ENCODE measurements at regions of chr1 and their contacts with region 1.

Region 1: DNA sequence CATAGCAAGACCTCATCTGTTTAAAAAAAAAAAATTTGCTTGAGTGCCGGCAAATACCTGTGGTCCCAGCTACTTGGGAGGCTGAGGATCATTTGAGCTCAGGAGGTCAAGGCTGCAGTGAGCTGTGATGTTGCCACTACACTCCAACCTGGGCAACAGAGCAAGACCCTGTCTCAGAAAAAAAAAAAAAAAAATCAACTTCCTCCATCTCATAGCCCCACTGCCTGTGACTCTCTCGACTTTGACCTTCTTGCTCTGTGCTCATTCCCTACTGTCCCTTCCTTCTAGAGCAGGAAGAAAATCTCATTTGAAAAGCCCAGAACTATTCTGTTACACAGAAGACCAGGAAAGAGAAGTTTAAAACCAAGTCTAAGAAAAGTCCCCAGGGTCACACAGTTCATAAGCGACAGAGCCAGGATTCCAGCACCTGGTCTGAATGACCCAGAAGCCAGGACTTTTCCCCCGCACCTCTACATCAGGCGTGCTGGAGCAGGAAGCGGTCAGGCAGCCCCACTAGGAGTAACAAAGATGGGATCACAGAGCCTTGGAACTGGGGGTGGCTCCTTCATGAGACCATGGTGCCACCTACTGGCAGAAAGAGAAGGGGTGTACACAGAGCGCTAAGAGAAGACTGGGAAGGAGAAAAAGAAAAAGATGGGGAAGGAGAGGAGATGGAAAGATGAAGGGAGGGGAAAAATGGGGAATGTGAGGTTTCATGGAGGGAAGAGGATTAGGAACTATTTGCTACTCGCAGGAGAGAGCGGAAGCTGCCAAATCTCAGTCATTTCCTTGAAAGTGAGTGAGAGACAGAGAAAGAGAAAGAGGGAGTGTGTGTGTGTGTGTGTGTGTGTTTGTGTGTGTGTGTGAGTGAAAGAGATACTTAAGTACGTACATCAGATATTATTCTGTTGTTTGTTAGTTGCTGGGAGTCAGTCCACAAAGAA is 3.1 kb upstream of the P3R3URF start:
- DNase-seq: peak; percentile 85
- ATAC-seq: peak; percentile 88
- H3K4me3 ChIP-seq: no peak overlapping the region
- H3K27ac ChIP-seq: no peak overlapping the region
- H3K4me1 ChIP-seq: peaks cover 16% of the 10 kb centered on the region
- H3K27me3 ChIP-seq: no peaks in the 10 kb centered on the region
- CTCF ChIP-seq: peak; percentile 96
- POLR2A ChIP-seq: peak; percentile 47
- RAD21 ChIP-seq: peak; percentile 98

Region 2: GRCh38 chr1:45884700-45885099 is 294.7 kb before region 1 on chr1:
- CTCF ChIA-PET with region 1: no interaction called
- POLR2A ChIA-PET with region 1: no interaction called
- dilution Hi-C with region 1: no loop called
- in situ Hi-C with region 1: no loop called
- intact Hi-C with region 1: loop called (anchors 5 kb)
- DNase-seq: peak; percentile 37
- ATAC-seq: no peak
- H3K4me3 ChIP-seq: no peak overlapping the region
- H3K27ac ChIP-seq: no peak overlapping the region
- H3K4me1 ChIP-seq: peaks cover 16% of the 10 kb centered on the region
- H3K27me3 ChIP-seq: no peaks in the 10 kb centered on the region
- CTCF ChIP-seq: no peak
- POLR2A ChIP-seq: no peak
- RAD21 ChIP-seq: no peak

Region 3: GRCh38 chr1:46036894-46037839 is 142.2 kb before region 1 on chr1:
- CTCF ChIA-PET with region 1: interaction called, 7 read pairs
- POLR2A ChIA-PET with region 1: no interaction called
- dilution Hi-C with region 1: loop called (anchors 25 kb)
- in situ Hi-C with region 1: loop called (anchors 5 kb)
- intact Hi-C with region 1: loop called (anchors 1 kb)
- DNase-seq: peak; percentile 77
- ATAC-seq: peak; percentile 78
- H3K4me3 ChIP-seq: no peak overlapping the region
- H3K27ac ChIP-seq: no peak overlapping the region
- H3K4me1 ChIP-seq: peaks cover 6% of the 10 kb centered on the region; the same call in 1 of the 2 replicates
- H3K27me3 ChIP-seq: no peaks in the 10 kb centered on the region
- CTCF ChIP-seq: peak; percentile 98
- POLR2A ChIP-seq: no peak
- RAD21 ChIP-seq: peak; percentile 99

Region 4: DNA sequence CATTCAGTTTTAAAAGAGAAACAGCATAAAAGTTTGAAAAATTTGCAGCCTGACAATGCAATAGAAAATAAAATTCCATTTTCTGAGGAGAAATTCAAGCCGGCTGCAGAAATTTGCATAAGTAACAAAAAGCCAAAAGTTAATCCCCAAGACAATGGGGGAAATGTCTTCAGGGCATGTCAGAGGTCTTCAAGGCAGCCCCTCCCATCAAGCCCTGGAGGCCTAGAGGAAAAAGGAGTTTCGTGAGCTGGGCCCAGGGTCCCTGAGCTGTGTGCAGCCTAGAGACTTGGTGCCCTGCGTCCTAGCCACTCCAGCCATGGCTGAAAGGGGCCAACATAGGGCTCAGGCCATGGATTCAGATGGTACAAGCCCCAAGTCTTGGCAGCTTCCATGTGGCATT is 121.6 kb before region 1 on chr1:
- CTCF ChIA-PET with region 1: no interaction called
- POLR2A ChIA-PET with region 1: no interaction called
- dilution Hi-C with region 1: no loop called
- in situ Hi-C with region 1: no loop called
- intact Hi-C with region 1: loop called (anchors 5 kb)
- DNase-seq: no peak
- ATAC-seq: no peak
- H3K4me3 ChIP-seq: no peak overlapping the region
- H3K27ac ChIP-seq: no peak overlapping the region
- H3K4me1 ChIP-seq: no peaks in the 10 kb centered on the region
- H3K27me3 ChIP-seq: no peaks in the 10 kb centered on the region
- CTCF ChIP-seq: no peak
- POLR2A ChIP-seq: no peak
- RAD21 ChIP-seq: no peak

Region 5: DNA sequence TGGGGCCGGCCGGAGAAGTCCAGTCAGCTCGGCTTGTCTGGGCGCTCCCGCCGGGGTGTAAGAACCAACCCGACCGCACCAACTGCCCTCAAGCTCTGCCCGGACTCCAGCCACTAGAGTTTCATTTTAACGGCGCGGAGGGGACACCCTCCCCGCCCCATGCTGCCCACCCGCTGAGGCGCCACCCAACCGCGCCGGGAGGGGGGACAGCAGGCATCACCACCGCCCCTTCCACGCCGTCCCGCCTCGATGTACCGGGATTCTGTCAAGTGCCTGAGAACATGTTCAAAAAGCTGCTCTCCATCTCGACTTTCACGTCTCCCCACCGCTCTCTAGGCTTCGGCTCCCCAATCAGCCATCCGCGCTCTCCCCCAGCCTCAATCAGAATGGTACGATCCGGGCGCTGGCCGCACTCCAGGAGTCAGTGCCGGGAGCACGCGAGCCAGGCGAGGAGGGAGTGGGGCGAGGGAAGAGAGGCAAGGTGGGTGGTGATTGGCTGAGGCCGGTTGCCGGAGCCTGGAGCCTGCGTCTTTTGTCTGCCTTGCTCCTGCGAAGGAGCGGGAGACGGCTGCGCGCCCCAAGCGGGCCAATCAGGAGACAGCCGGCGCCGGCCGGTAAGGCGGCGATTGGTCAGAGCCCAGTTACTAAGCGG is 46.8 kb before region 1 on chr1 and contains the start of gene PIK3R3:
- CTCF ChIA-PET with region 1: no interaction called
- POLR2A ChIA-PET with region 1: no interaction called
- dilution Hi-C with region 1: no loop called
- in situ Hi-C with region 1: no loop called
- intact Hi-C with region 1: loop called (anchors 1 kb)
- DNase-seq: peak; percentile 99
- ATAC-seq: peak; percentile 93
- H3K4me3 ChIP-seq: peak within 1 kb of the TSS; percentile 56
- H3K27ac ChIP-seq: peak within 1 kb of the TSS; percentile 97
- H3K4me1 ChIP-seq: peaks cover 5% of the 10 kb centered on the region
- H3K27me3 ChIP-seq: no peaks in the 10 kb centered on the region
- CTCF ChIP-seq: no peak
- POLR2A ChIP-seq: peak; percentile 99
- RAD21 ChIP-seq: no peak
- total RNA-seq, gene PIK3R3: 9.9 and 14.7 TPM in 2 replicates

Region 6: DNA sequence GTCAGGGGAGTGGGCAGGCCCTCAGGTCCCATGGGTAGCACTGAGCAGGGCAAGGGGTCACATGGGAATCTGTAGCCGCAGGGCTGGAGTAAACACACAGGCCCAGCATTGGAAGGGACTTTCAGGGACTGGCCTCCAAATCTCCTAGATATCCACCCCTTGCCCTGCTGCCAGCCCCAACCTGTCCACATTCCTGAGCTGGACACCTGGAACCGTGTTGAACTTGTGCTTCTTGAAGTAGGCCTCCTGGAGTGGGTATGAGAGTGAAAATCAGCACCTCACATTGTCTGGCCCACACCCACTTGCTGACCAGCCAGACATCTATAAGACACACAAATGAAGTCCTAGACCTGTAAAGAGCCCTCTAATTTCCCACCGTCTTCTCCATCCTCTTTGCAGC is 11.1 kb after region 1 on chr1:
- CTCF ChIA-PET with region 1: no interaction called
- POLR2A ChIA-PET with region 1: no interaction called
- dilution Hi-C with region 1: no loop called
- in situ Hi-C with region 1: no loop called
- intact Hi-C with region 1: no loop called
- DNase-seq: no peak
- ATAC-seq: no peak
- H3K4me3 ChIP-seq: no peak overlapping the region
- H3K27ac ChIP-seq: no peak overlapping the region
- H3K4me1 ChIP-seq: peaks cover 9% of the 10 kb centered on the region
- H3K27me3 ChIP-seq: no peaks in the 10 kb centered on the region
- CTCF ChIP-seq: no peak
- POLR2A ChIP-seq: no peak
- RAD21 ChIP-seq: no peak

Region 7: GRCh38 chr1:46223472-46223943 is 44.1 kb after region 1 on chr1:
- CTCF ChIA-PET with region 1: interaction called, 21 read pairs
- POLR2A ChIA-PET with region 1: no interaction called
- dilution Hi-C with region 1: no loop called
- in situ Hi-C with region 1: no loop called
- intact Hi-C with region 1: loop called (anchors 1 kb)
- DNase-seq: peak; percentile 93
- ATAC-seq: peak; percentile 98
- H3K4me3 ChIP-seq: no peak overlapping the region
- H3K27ac ChIP-seq: no peak overlapping the region
- H3K4me1 ChIP-seq: peaks cover 1% of the 10 kb centered on the region; the same call in 1 of the 2 replicates
- H3K27me3 ChIP-seq: no peaks in the 10 kb centered on the region
- CTCF ChIP-seq: peak; percentile 91
- POLR2A ChIP-seq: no peak
- RAD21 ChIP-seq: peak; percentile 88

Measured in IMR-90 (cell line).